ENCODE measurements at regions of chr1 and their contacts with region 1.

Region 1: GRCh38 chr1:47710329-47711071 is 272.7 kb downstream of the FOXD2 start:
- DNase-seq: peak; percentile 68

Region 2: DNA sequence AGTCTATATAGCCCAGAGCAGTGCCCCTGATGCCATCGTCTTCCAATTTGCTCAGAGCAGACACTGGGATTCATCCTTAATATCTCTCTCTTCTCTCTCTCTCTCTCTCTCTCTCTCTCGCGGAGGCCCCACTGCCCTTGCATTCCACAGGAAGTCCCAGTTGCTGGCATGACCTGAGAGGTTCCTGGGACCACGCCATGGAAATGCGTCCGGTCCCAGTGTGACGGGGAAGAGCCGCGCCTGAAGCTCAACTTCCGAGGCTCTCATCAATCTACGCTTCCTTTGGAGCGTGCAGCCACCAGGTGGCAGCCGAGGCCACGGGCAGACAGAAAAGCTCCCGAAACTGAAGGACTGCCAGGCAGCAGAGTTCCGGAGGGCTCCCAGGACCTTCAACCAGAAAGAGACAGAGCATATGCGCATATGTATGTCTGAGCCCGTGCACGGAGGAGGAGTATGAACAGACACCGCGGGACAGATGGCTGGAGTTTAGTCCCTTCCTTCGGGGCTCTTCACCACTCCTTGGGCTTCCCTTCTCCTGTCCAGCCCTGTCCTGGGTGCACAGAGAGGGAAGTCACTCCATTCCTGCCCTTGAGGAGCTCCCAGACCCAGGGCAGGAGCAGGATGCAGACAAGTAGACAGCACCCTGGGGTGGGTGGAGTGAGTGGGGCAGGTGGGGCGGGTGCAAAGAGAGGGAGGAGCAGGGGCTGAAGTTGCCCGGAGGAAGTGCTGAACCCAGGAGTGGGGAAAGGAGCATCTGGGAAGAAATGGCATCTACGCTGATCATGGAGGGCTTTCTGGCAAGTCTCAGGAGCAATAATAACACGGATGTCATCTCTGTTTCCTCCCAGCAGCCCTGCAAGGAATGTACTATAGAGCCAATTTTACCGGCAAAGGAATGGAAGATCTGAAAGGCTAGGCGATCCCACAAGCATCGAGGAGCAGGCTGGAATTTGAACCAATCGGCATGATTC is 531.2 kb before region 1 on chr1:
- in situ Hi-C with region 1: loop called (anchors 25 kb)
- DNase-seq: peak; percentile 97

Region 3: GRCh38 chr1:47437447-47438164 is 272.9 kb before region 1 on chr1 and contains the start of gene FOXD2:
- in situ Hi-C with region 1: loop called (anchors 25 kb)
- DNase-seq: peak; percentile 96

Region 4: DNA sequence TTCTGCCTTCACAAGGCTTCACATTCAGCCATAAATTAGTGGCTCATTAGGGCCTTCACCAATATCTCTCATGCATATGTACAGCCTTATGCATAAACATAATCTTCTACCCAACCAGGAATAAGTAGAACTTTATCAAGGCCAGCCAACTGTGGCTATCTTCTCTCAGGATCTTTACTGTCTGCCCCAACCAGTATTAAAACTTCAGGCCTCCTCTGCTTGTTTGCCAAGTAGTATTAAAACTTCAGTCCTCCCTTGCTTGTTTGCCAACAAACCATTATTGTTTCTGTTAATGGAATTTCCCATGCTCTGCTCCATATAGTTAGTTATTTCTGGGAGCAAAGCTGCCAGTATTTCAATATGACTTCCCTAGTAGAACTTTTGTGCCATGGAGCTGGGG is 592.2 kb after region 1 on chr1:
- in situ Hi-C with region 1: no loop called
- DNase-seq: no peak

Measured in KBM-7 (cell line).